Right ventricle myocardium superior (tissue), 1 donor: ENCODE measurements at regions of chr18 and their contacts with region 1.

Region 1: GRCh38 chr18:34122724-34123334 is 101.9 kb downstream of the NOL4 start:
- DNase-seq: no peak
- ATAC-seq: peak; percentile 67

Region 2: DNA sequence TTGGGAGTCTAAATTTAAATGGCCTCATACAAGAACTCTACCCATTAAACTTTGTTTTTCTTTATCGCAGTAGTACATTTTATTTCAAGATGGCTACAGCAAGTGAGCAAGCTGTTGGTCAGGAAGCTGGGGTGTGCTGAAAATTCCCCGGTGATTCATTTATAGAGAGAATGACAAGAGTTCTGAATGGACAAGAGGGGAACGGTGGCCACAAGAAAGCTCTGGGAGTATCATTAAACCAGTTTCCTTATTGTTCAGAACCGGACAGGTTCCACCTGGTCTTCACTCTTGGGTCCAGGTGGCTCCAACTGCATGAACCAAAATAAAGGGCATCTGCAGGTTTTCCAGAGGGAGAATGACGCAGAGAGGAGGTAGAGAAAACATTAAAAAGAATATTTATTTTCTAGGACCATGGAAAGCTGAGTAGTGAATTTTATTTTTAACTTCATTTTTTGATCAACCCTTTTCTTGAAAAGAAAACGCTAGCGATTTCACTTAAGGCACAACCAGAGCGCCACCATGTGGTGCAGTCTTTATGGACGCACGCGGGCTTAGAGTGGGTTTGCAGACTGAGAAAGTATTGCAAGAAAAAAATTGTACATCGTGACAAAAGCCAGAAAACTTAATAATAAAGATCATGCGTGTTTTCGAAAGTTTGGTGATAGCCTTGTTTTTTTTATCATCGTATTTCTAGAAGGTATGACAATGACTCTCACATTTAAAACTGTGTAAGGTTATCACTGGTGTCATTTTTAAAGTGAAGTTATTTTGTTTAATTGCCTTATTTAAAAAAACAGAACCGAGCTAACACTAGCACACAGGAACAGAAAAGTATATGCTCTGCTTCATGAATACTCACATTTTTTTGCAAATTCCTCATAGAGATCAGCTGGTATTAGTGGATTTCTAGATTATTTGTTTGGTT is 199.8 kb after region 1 on chr18:
- intact Hi-C with region 1: loop called (anchors 5 kb)
- DNase-seq: peak; percentile 44
- ATAC-seq: no peak